Activated CD4-positive, alpha-beta T cell treated with anti-CD3 and anti-CD28 coated beads for 36 hours (primary cell): ENCODE measurements at regions of chr1 and their contacts with region 1.

Region 1: GRCh38 chr1:241592273-241592958 is 47.8 kb downstream of the CHML start:
- DNase-seq: no peak
- ATAC-seq: peak; percentile 99
- H3K4me3 Mint-ChIP-seq: no peak overlapping the region
- H3K27ac Mint-ChIP-seq: peak overlapping the region; percentile 85
- H3K4me1 Mint-ChIP-seq: peaks cover 34% of the 10 kb centered on the region
- H3K27me3 Mint-ChIP-seq: no peaks in the 10 kb centered on the region

Region 2: DNA sequence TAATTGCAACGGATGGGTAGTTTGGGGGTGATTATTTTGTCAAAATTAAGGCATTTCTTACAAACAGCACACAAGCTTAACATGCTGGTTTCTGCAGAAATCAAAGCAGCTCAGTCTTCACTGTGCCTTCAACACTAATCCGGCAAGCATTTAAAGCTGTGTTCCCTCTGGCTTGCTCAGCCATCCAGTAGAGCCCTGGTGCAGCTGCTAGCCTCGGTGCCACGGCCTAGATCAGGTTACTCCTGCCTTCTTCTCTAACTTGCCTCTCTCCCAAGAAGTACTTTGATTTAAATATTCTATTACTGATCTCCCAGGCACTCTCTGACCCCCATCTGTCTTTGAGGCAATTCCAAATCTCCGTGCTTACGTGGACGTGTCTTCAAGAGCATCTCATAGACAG is 1066.1 kb before region 1 on chr1:
- CTCF ChIA-PET with region 1: no interaction called
- POLR2A ChIA-PET with region 1: no interaction called
- intact Hi-C with region 1: no loop called
- DNase-seq: no peak
- ATAC-seq: no peak
- H3K4me3 Mint-ChIP-seq: no peak overlapping the region
- H3K27ac Mint-ChIP-seq: no peak overlapping the region
- H3K4me1 Mint-ChIP-seq: no peaks in the 10 kb centered on the region
- H3K27me3 Mint-ChIP-seq: no peaks in the 10 kb centered on the region

Region 3: DNA sequence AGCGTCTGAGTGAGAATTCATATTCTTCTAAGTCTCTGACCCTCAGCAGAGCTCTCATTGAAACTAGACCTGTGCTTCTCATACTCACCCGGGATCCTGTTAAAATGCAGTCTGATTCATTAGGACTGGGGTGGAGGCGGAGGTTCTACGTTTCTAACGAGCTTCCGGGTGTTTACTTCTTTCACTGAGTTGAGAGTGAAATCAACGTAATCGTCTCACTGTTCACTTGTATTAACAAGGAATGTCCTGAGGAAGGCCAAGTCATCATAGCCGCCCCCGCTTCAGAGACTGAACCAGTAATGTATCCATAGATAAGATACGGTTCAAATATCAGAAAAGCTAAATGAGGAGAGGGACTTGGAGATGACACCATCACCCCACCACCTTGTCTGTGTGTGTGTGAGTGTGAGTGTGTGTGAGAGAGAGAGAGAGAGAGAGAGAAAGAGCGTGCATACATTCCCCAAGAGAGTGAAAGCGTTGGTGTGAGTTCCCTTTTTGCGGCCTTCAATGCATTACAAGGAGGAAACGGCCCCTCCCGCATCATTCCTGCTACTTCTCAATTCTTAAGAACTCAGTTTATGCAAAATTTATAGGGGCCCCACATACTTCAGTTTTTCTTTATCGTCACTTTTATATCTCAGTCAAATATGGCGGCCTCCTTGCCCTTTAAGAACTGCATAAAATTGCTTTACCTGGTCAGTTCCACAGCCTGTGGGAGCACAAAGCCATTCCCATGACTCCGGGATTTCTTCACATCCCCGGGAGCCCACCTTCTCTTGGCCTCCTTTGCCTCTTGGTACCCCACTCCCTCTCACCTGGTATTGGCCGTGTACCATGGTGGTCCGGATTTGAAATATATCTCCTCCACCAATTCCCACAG is 40.4 kb before region 1 on chr1:
- CTCF ChIA-PET with region 1: interaction called, 6 read pairs
- POLR2A ChIA-PET with region 1: no interaction called
- intact Hi-C with region 1: loop called (anchors 1 to 2 kb)
- DNase-seq: peak; percentile 75
- ATAC-seq: peak; percentile 97
- H3K4me3 Mint-ChIP-seq: peak overlapping the region; percentile 71
- H3K27ac Mint-ChIP-seq: peak overlapping the region; percentile 98
- H3K4me1 Mint-ChIP-seq: peaks cover 30% of the 10 kb centered on the region
- H3K27me3 Mint-ChIP-seq: no peaks in the 10 kb centered on the region

Region 4: GRCh38 chr1:241828463-241829021 is 236.1 kb after region 1 on chr1:
- CTCF ChIA-PET with region 1: no interaction called
- POLR2A ChIA-PET with region 1: no interaction called
- intact Hi-C with region 1: no loop called
- DNase-seq: no peak
- ATAC-seq: peak; percentile 33
- H3K4me3 Mint-ChIP-seq: no peak overlapping the region
- H3K27ac Mint-ChIP-seq: no peak overlapping the region
- H3K4me1 Mint-ChIP-seq: no peaks in the 10 kb centered on the region
- H3K27me3 Mint-ChIP-seq: peaks cover 7% of the 10 kb centered on the region